ENCODE measurements at regions of chr10 and their contacts with region 1.

Region 1: GRCh38 chr10:14543046-14543903 is 212.6 kb upstream of the FRMD4A start:
- DNase-seq: no peak
- H3K27ac ChIP-seq: no peak overlapping the region
- CTCF ChIP-seq: 0 out of 2 replicates have a peak, but pooled peaks have one; percentile 10

Region 2: GRCh38 chr10:14554491-14555205 is 11.4 kb after region 1 on chr10:
- CTCF ChIA-PET with region 1: no interaction called
- POLR2A ChIA-PET with region 1: interaction called, 11 read pairs
- DNase-seq: peak; percentile 41
- H3K27ac ChIP-seq: no peak overlapping the region
- CTCF ChIP-seq: no peak

Region 3: DNA sequence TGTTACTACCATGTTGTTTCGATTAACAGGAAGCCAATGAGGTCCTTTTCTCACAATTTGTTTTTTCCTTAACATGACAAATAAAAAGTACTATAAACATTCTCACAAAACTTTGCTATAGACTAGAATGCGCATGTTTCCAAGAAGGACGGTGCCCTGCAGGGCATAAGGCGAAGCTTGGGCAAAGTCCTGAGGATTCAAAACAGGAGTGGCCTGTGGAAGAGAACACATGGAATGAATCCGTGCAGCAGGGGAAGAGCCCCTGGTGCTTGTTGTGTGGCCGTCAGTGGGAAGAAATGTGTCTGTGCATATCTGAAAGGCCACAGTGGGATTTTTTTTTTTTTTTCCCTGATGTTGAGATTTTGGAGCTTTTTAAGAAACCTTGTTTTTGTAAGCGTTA is 1108.8 kb after region 1 on chr10:
- CTCF ChIA-PET with region 1: no interaction called
- POLR2A ChIA-PET with region 1: no interaction called
- DNase-seq: no peak
- H3K27ac ChIP-seq: no peak overlapping the region
- CTCF ChIP-seq: no peak